ENCODE measurements at regions of chr15 and their contacts with region 1.

Region 1: GRCh38 chr15:69328739-69329138 is 30.0 kb downstream of the PAQR5 start:
- DNase-seq: no peak
- H3K4me3 ChIP-seq: no peak overlapping the region
- H3K27ac ChIP-seq: no peak overlapping the region
- H3K4me1 ChIP-seq: no peaks in the 10 kb centered on the region
- H3K27me3 ChIP-seq: no peaks in the 10 kb centered on the region
- CTCF ChIP-seq: no peak
- POLR2A ChIP-seq: no peak

Region 2: GRCh38 chr15:69280783-69281182 is 48.0 kb before region 1 on chr15:
- intact Hi-C with region 1: no loop called
- DNase-seq: no peak
- H3K4me3 ChIP-seq: no peak overlapping the region
- H3K27ac ChIP-seq: no peak overlapping the region
- H3K4me1 ChIP-seq: no peaks in the 10 kb centered on the region
- H3K27me3 ChIP-seq: no peaks in the 10 kb centered on the region
- CTCF ChIP-seq: no peak
- POLR2A ChIP-seq: no peak

Region 3: DNA sequence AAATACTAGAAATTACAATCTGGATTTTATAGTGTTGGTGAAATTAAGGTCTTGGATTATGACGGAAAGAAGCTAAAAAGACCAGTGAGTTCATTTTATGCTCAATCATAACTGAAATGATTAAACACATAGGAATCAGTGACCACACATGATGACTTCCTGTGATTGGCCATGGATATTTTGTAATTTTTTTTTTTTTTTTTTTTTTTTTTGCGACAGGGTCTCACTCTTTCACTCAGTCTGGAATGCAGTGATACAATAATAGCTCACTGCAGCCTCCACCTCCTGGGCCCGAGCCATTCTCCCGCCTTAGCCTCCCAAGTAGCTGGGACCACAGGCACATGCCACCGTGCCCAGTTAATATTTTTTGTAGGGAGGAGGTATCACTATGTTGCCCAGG is 17.4 kb after region 1 on chr15:
- intact Hi-C with region 1: loop called (anchors 1 kb)
- DNase-seq: no peak
- H3K4me3 ChIP-seq: no peak overlapping the region
- H3K27ac ChIP-seq: no peak overlapping the region
- H3K4me1 ChIP-seq: no peaks in the 10 kb centered on the region
- H3K27me3 ChIP-seq: no peaks in the 10 kb centered on the region
- CTCF ChIP-seq: no peak
- POLR2A ChIP-seq: no peak

Measured in breast epithelium (tissue), 4 donors.